Activated CD8-positive, alpha-beta T cell treated with anti-CD3 and anti-CD28 coated beads, Interleukin-2, amount 10 ng/mL, durations not matched to agents 7 days and 5 days (primary cell): ENCODE measurements at regions of chr5 and their contacts with region 1.

Region 1: GRCh38 chr5:141430332-141431113 is at the start of gene PCDHGA12:
- DNase-seq: peak; percentile 45
- ATAC-seq: no peak
- H3K4me3 Mint-ChIP-seq: peak within 1 kb of the TSS; percentile 63
- H3K27ac Mint-ChIP-seq: peak within 1 kb of the TSS; percentile 62
- H3K4me1 Mint-ChIP-seq: peaks cover 18% of the 10 kb centered on the region
- H3K27me3 Mint-ChIP-seq: peaks cover 40% of the 10 kb centered on the region
- total RNA-seq, gene PCDHGA12: not detected

Region 2: DNA sequence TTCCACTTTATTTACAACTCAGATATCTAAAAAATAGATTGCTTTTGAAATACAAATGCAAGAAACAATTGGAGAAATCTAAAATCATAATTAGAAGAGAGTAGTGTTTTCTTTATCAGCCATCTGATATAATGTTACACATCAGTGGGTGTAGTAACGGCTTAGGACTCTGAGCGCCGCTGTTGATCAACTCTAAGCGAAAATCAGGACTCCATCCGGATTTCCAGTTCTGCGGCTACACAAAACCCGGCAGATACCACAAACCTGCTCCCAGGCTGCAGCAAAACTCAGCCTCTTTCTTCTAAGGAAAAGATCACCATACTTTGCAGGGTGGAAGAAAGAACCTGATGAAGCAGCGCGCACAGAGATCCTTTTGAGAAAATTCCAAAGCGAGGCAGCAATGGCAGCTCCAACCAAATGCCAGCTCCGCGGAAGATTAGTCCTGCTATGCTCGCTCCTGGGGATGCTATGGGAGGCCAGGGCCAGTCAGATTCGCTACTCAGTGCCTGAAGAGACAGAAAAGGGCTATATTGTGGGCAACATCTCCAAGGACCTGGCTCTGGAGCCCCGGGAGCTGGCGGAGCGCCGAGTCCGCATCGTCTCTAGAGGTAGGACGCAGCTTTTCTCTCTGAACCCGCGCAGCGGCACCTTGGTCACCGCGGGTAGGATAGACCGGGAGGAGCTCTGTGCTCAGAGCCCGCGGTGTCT is 27.8 kb before region 1 on chr5 and contains the start of gene PCDHGA9:
- CTCF ChIA-PET with region 1: interaction called, 10 read pairs
- POLR2A ChIA-PET with region 1: no interaction called
- DNase-seq: no peak
- ATAC-seq: no peak
- H3K4me3 Mint-ChIP-seq: peak within 1 kb of the TSS; percentile 26
- H3K27ac Mint-ChIP-seq: no peak within 1 kb of the TSS
- H3K4me1 Mint-ChIP-seq: peaks cover 3% of the 10 kb centered on the region
- H3K27me3 Mint-ChIP-seq: peaks cover 46% of the 10 kb centered on the region
- total RNA-seq, gene PCDHGA9: 0.08 TPM in 1 of 2 experiments, not detected in the other

Region 3: GRCh38 chr5:141524604-141525597 is 94.4 kb after region 1 on chr5:
- CTCF ChIA-PET with region 1: interaction called, 15 read pairs
- POLR2A ChIA-PET with region 1: no interaction called
- DNase-seq: peak; percentile 58
- ATAC-seq: peak; percentile 75
- H3K4me3 Mint-ChIP-seq: no peak overlapping the region
- H3K27ac Mint-ChIP-seq: peak overlapping the region; percentile 75
- H3K4me1 Mint-ChIP-seq: peaks cover 32% of the 10 kb centered on the region
- H3K27me3 Mint-ChIP-seq: no peaks in the 10 kb centered on the region